ENCODE measurements at regions of chr9 and their contacts with region 1.

Region 1: DNA sequence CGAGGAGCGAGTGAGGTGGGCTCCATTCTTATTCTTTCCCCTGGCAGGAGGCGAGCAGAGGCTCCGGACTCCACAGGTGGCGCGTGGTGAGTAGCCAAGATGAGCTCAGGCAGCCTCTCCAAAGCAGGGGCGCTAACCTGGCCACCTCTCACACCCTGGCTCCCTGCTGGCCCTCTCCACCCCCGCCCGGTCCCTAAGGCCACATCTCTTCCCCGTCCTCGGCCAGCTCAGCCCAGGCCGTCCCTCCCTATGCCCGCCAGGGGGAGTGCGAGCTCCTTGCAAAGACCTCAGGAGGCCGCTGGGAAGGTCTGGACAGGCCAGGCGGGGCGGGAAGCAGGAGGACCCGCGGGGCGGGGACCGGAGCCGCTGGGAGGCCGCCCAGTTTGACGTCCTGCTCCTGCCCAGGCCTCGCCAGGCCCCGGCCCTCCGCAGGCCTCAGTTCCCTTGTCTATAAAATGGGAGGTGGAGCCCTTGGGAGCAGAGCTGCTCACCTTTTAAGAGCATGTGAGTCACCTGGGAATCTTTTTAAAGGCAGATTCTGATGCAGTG is 46.3 kb upstream of the GGTA1 start:
- DNase-seq: peak; percentile 95 to 99 (median 98)
- ATAC-seq: peak; percentile 88 to 93 (median 92)
- H3K4me3 ChIP-seq: peak overlapping the region in 10 of 12 donors; percentile 15 to 48 (median 24)
- H3K27ac ChIP-seq: peak overlapping the region in 4 of 12 donors; percentile 32 to 62 (median 50)
- H3K4me1 ChIP-seq: peaks cover 0 to 25% (median 15%) of the 10 kb centered on the region in 12 donors
- H3K27me3 ChIP-seq: no peaks in the 10 kb centered on the region
- CTCF ChIP-seq: peak; percentile 91 to 98 (median 96)
- POLR2A ChIP-seq: peak in 1 of 2 donors; percentile 23

Region 2: GRCh38 chr9:121609845-121610570 is 64.1 kb after region 1 on chr9:
- intact Hi-C with region 1: loop called in 1 of 10 experiments (anchors 5 kb)
- DNase-seq: peak in 4 of 5 donors; percentile 48 to 84 (median 54)
- ATAC-seq: peak; percentile 36 to 66 (median 55)
- H3K4me3 ChIP-seq: no peak overlapping the region
- H3K27ac ChIP-seq: peak overlapping the region; percentile 61 to 93 (median 84)
- H3K4me1 ChIP-seq: peaks cover 27 to 89% (median 75%) of the 10 kb centered on the region in 12 donors
- H3K27me3 ChIP-seq: no peaks in the 10 kb centered on the region
- CTCF ChIP-seq: no peak
- POLR2A ChIP-seq: no peak

Region 3: DNA sequence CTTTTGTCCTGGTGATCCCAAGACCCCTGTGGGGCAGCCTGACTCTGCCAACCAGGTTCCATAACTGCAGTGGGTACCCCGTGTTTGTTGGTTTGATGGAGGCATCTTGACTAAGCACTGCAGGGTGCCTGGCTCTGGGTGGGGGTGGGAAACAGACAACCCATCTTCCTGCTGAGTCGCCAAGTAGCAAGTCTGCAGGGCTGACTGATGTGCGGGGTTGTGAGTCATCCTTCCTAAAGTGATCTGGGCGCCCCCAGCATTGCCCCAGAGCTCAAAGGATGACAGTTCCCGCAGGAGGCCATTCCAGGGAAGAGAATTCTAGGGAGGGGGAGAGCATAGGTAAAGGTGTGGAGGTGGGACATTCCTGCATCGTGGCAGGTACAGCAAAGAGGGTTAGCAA is 129.0 kb after region 1 on chr9:
- intact Hi-C with region 1: loop called in 5 of 10 experiments (anchors 2 to 10 kb)
- DNase-seq: no peak
- ATAC-seq: no peak
- H3K4me3 ChIP-seq: no peak overlapping the region
- H3K27ac ChIP-seq: peak overlapping the region in 1 of 12 donors; percentile 42
- H3K4me1 ChIP-seq: peaks cover 4 to 70% (median 53%) of the 10 kb centered on the region in 12 donors
- H3K27me3 ChIP-seq: no peaks in the 10 kb centered on the region
- CTCF ChIP-seq: no peak
- POLR2A ChIP-seq: no peak

Region 4: DNA sequence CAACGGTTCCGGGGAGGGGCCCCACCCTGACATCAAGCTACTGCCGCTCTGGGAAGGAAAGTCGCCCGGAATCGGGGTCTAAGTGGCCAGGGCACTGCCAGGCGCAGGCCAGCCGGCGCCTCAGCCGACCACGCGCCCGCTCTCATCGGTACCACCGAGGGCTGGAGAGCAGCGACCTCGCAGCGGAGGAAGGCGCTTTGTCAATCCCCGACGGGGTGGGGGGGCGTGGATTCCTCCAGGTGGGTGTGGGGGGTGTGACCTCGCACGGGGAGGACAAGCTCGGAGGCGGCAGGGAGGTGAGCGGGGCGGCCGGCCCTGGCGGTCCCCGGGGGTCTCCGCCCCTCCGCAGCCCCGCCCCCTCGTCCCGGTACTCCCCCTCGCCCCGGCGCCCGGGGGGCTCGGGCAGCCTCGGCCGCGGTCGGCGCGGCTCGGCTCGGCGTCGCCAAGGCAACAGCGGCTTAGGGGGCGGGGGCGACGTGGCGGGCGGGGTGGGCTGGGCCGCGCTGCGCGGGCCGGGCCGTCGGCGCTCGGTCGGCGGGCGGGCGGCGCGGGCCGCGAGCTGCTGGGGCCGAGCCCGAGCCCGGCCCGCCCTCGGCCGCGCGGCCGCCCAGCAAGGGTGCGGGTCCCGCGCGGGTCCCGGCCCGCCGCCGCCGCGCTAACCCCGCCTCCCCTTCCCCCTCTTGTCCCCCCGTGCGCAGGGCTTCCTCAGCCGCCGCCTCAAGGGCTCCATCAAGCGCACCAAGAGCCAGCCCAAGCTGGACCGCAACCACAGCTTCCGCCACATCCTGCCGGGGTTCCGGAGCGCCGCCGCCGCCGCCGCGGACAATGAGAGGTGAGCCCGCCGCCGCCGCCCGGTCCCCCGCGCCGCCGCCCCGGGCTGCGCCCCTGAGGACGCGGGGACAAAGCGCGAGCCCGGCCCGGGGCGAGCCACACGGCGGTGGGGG is 152.9 kb after region 1 on chr9:
- intact Hi-C with region 1: loop called in 2 of 10 experiments (anchors 5 to 10 kb)
- DNase-seq: peak; percentile 69 to 85 (median 78)
- ATAC-seq: peak in 3 of 4 donors; percentile 39 to 44 (median 44)
- H3K4me3 ChIP-seq: peak overlapping the region; percentile 19 to 77 (median 58)
- H3K27ac ChIP-seq: peak overlapping the region; percentile 48 to 88 (median 80)
- H3K4me1 ChIP-seq: peaks cover 17 to 61% (median 36%) of the 10 kb centered on the region in 12 donors
- H3K27me3 ChIP-seq: peaks cover 0 to 37% (median 0%) of the 10 kb centered on the region in 9 donors
- CTCF ChIP-seq: no peak
- POLR2A ChIP-seq: no peak

Region 5: DNA sequence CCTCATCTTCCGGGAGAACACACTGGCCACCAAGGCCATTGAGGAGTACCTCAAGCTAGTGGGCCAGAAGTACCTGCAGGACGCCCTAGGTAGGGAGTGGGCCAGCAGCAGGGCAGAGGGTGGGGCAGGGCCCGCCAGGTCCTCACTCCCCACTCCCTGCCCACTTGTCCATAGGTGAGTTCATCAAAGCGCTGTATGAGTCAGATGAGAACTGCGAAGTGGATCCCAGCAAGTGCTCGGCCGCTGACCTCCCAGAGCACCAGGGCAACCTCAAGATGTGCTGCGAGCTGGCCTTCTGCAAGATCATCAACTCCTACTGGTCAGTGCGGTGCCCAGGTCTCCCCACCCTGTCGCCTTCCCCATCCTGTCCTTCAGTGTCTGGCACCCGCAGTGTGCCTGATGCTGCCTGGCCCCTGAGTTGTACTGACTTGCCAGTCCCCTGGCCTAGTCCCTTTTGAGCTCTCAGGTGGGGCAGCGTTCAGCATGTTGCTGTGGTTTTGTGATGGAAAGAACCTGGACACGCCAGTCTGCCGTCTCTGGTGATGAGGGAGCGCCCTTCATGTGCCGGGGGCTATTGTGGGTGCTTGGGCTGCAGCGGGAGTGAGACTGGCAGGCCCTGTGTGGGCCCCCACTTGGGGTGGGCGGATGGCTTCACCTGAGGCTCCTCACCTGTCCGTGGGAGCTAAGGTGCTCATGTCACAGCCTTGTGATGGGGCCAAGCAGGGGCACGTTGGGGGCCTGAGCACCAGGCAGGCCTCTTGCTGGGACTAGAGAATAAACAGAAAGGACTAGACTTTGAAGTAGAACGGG is 217.8 kb after region 1 on chr9:
- intact Hi-C with region 1: loop called in 1 of 10 experiments (anchors 5 kb)
- DNase-seq: peak in 1 of 5 donors; percentile 63
- ATAC-seq: no peak
- H3K4me3 ChIP-seq: no peak overlapping the region
- H3K27ac ChIP-seq: peak overlapping the region in 7 of 12 donors; percentile 13 to 84 (median 65)
- H3K4me1 ChIP-seq: peaks cover 4 to 61% (median 29%) of the 10 kb centered on the region in 12 donors
- H3K27me3 ChIP-seq: no peaks in the 10 kb centered on the region
- CTCF ChIP-seq: no peak
- POLR2A ChIP-seq: no peak

Region 6: GRCh38 chr9:121992571-121993212 is 446.7 kb after region 1 on chr9:
- intact Hi-C with region 1: loop called (anchors 1 to 5 kb)
- DNase-seq: peak in 4 of 5 donors; percentile 58 to 71 (median 64)
- ATAC-seq: peak; percentile 61 to 78 (median 69)
- H3K4me3 ChIP-seq: no peak overlapping the region
- H3K27ac ChIP-seq: no peak overlapping the region
- H3K4me1 ChIP-seq: peaks cover 0 to 25% (median 4%) of the 10 kb centered on the region in 12 donors
- H3K27me3 ChIP-seq: no peaks in the 10 kb centered on the region
- CTCF ChIP-seq: peak; percentile 77 to 95 (median 86)
- POLR2A ChIP-seq: no peak

Measured in heart left ventricle (tissue), 16 donors.